ENCODE measurements at regions of chr14 and their contacts with region 1.

Region 1: DNA sequence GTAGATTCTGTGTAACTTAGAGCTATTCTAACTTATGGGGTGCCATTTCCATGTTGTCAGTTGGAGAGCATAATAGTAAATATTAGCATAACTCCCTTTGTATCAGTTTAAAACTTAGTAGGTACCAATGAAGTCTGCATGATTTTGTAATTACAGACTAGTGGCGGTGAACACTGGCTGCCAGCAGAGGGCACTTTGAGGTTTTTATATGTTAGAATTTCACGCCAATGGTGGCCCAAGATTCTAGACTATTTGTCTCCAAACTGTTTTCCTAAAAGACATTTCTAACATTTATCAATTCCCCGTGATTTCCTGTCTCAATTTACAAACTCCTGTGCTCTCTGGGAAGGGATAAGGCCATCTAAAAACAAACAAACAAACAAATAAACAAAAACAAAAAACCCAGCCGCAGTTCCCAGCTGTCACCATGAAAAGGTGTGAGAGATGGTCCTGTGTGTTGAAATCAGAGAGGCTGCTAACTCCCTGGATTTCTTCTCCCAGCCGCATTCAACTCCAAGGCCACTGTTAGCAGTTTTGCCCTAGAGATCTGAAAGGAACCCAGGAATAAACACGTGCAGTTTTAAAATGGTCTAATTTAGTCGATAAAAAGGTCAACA is 57.6 kb downstream of the BRMS1L start:
- DNase-seq: peak; percentile 37
- H3K4me3 Mint-ChIP-seq: no peak overlapping the region
- H3K27ac Mint-ChIP-seq: no peak overlapping the region
- H3K4me1 Mint-ChIP-seq: peaks cover 8% of the 10 kb centered on the region
- H3K27me3 Mint-ChIP-seq: no peaks in the 10 kb centered on the region
- CTCF ChIP-seq: peak; percentile 58

Region 2: DNA sequence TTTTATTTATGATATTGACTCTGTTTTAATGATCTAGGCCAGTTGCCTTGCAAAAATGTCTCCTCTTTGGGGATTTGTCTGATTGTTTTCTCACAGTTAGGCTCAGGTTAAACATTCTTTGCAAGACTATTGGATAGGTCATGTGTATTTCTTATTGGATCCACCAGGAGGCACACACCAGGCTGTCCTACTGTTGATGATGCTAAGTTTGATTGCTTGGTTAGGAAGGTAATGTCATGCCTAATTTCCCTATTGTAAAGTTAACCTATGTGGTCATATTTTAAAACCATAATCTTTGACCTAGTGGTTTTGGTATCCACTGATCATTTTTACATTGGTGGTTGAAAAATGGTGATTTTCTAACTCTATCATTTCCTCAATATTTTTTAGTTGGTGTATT is 79.4 kb after region 1 on chr14:
- CTCF ChIA-PET with region 1: no interaction called
- intact Hi-C with region 1: loop called (anchors 2 kb)
- DNase-seq: peak; percentile 16
- H3K4me3 Mint-ChIP-seq: no peak overlapping the region
- H3K27ac Mint-ChIP-seq: no peak overlapping the region
- H3K4me1 Mint-ChIP-seq: peaks cover 14% of the 10 kb centered on the region
- H3K27me3 Mint-ChIP-seq: no peaks in the 10 kb centered on the region
- CTCF ChIP-seq: no peak

Region 3: GRCh38 chr14:36207500-36207899 is 323.7 kb after region 1 on chr14:
- CTCF ChIA-PET with region 1: no interaction called
- intact Hi-C with region 1: loop called (anchors 5 kb)
- DNase-seq: no peak
- H3K4me3 Mint-ChIP-seq: no peak overlapping the region
- H3K27ac Mint-ChIP-seq: no peak overlapping the region
- H3K4me1 Mint-ChIP-seq: no peaks in the 10 kb centered on the region
- H3K27me3 Mint-ChIP-seq: no peaks in the 10 kb centered on the region
- CTCF ChIP-seq: peak; percentile 12

Region 4: GRCh38 chr14:36604757-36605505 is 721.1 kb after region 1 on chr14:
- CTCF ChIA-PET with region 1: no interaction called
- intact Hi-C with region 1: loop called (anchors 5 kb)
- DNase-seq: peak; percentile 68
- H3K4me3 Mint-ChIP-seq: no peak overlapping the region
- H3K27ac Mint-ChIP-seq: no peak overlapping the region
- H3K4me1 Mint-ChIP-seq: peaks cover 12% of the 10 kb centered on the region
- H3K27me3 Mint-ChIP-seq: peaks cover 20% of the 10 kb centered on the region
- CTCF ChIP-seq: peak; percentile 52